ENCODE measurements at regions of chr2 and their contacts with region 1.

Region 1: GRCh38 chr2:195559431-195559914 is 97.6 kb upstream of the SLC39A10 start:
- DNase-seq: peak; percentile 94
- H3K4me3 Mint-ChIP-seq: peak overlapping the region; percentile 61
- H3K27ac Mint-ChIP-seq: peak overlapping the region; percentile 95
- H3K4me1 Mint-ChIP-seq: peaks cover 78% of the 10 kb centered on the region
- H3K27me3 Mint-ChIP-seq: no peaks in the 10 kb centered on the region

Region 2: GRCh38 chr2:195498176-195498575 is 61.3 kb before region 1 on chr2:
- CTCF ChIA-PET with region 1: interaction called, 3 read pairs
- POLR2A ChIA-PET with region 1: interaction called, 13 read pairs
- DNase-seq: peak; percentile 52
- H3K4me3 Mint-ChIP-seq: no peak overlapping the region
- H3K27ac Mint-ChIP-seq: no peak overlapping the region
- H3K4me1 Mint-ChIP-seq: peaks cover 43% of the 10 kb centered on the region
- H3K27me3 Mint-ChIP-seq: no peaks in the 10 kb centered on the region

Region 3: GRCh38 chr2:195533771-195534642 is 25.5 kb before region 1 on chr2:
- CTCF ChIA-PET with region 1: interaction called, 34 read pairs
- POLR2A ChIA-PET with region 1: interaction called, 21 read pairs
- DNase-seq: peak; percentile 81
- H3K4me3 Mint-ChIP-seq: peak overlapping the region; percentile 89
- H3K27ac Mint-ChIP-seq: peak overlapping the region; percentile 100
- H3K4me1 Mint-ChIP-seq: peaks cover 91% of the 10 kb centered on the region
- H3K27me3 Mint-ChIP-seq: no peaks in the 10 kb centered on the region

Region 4: DNA sequence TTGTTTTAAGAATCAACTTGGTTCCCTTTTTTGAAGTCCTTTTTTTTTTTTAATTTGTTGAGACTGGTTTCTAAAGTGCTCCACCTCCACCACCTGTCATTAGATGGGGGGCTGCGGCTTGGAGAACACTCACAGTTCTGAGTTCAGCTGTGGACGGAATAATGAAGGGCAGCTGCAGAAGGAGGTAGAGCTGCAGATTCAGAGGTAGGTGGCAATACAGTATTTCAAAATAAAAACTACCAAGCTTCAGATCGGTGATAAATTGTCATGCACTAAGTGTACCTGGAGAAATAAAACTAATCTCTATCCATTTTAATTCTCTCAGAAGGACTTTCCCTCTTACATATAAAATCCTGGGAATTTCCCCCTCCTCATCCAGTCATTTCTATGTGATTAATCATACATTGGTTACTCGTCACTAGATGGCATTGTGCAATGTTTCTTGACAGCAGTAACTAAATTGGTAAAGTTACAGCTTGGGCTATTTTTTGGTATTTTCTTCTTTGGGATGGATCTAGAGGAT is 16.5 kb after region 1 on chr2:
- CTCF ChIA-PET with region 1: interaction called, 11 read pairs
- POLR2A ChIA-PET with region 1: interaction called, 3 read pairs
- DNase-seq: no peak
- H3K4me3 Mint-ChIP-seq: peak overlapping the region; percentile 35
- H3K27ac Mint-ChIP-seq: peak overlapping the region; percentile 83
- H3K4me1 Mint-ChIP-seq: peaks cover 74% of the 10 kb centered on the region
- H3K27me3 Mint-ChIP-seq: no peaks in the 10 kb centered on the region

Region 5: DNA sequence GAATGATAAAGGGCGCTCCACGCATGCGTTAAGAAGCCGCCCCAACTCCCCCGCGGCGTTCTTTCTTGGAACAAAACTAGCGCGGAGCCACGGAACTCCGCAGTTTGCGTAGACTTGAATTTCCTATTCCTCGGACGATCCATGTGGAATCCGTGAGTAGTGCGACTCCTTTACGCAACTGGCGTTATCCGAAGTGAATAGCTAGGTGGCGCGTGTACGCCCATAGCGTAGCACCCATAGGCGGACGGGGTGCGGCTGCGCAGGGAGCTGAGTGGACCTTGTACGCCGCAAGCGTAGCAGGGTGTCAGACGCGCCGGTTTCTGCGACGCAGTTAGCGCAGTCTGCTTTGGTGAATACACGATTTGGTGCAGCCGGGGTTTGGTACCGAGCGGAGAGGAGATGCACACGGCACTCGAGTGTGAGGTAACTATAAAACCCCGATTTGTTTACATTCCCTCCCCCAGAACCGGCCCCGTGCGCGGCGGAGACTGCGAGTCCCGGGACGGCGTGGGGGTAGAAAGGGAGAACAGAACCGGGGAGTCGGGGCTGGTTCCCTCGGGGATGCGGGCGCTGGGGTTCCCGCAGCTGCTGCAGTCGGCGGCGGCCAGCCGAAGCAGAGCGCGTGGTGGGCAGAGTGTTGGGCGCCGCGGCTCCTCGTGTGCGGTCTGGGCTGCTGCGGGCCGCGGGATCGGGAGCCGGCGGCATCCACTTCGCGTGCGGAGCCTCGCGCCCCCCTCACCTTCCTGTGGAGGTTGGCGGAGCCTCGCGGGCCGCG is 97.6 kb after region 1 on chr2 and contains the start of gene SLC39A10:
- CTCF ChIA-PET with region 1: interaction called, 4 read pairs
- POLR2A ChIA-PET with region 1: interaction called, 15 read pairs
- DNase-seq: peak; percentile 97
- H3K4me3 Mint-ChIP-seq: peak within 1 kb of the TSS; percentile 97
- H3K27ac Mint-ChIP-seq: peak within 1 kb of the TSS; percentile 99
- H3K4me1 Mint-ChIP-seq: peaks cover 23% of the 10 kb centered on the region
- H3K27me3 Mint-ChIP-seq: peaks cover 2% of the 10 kb centered on the region
- total RNA-seq, gene SLC39A10: 46.9 to 55.6 TPM